ENCODE measurements at regions of chr5 and their contacts with region 1.

Region 1: DNA sequence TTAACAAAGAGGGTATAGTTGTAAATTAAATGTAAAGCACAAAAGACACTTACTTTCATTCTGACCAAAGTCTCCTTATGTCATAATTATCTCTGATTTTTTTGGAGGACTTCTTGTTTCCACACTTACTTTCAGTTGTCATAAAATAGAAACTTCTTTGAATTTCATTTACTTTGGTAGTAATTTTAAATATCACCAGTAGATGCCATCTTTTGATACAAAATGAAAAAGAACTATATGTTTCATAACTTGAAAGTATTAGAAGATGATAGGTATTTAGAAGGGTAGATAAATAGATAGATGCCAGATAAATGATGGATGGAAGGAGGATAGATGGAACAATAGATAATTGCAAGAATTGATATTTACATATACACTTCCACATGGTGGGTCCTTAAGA is 1865.3 kb upstream of the CDH9 start:
- DNase-seq: no peak
- H3K4me3 ChIP-seq: no peak overlapping the region
- H3K27ac ChIP-seq: no peak overlapping the region
- H3K4me1 ChIP-seq: no peaks in the 10 kb centered on the region
- H3K27me3 ChIP-seq: no peaks in the 10 kb centered on the region
- CTCF ChIP-seq: peak; percentile 22; the same call in 1 of the 2 replicates

Region 2: DNA sequence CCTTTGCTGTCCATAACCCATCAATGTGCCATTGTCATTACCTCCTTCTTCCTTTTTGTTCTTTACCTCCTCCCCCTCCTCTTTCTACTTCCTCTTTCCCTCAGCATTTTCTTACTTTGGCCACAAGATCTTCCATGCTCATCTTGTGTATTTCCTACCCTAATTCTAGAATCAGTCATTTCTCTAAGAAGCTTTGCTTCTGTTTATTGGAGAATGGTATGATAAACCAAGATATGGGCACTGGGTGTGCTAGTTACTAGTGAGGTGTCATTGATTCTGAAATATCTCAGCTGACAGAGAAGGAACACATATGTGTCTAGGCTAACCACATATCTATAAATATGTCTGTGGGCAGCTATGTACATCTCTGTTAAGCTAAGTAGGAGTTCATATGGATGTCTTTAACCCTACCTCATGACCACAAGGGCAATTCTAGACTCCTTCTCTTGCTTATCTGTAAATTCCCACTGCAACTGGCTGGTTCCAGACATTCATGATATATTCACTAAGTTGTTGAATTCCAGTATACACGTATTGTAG is 186.0 kb after region 1 on chr5:
- CTCF ChIA-PET with region 1: no interaction called
- POLR2A ChIA-PET with region 1: no interaction called
- intact Hi-C with region 1: no loop called
- DNase-seq: no peak
- H3K4me3 ChIP-seq: no peak overlapping the region
- H3K27ac ChIP-seq: no peak overlapping the region
- H3K4me1 ChIP-seq: no peaks in the 10 kb centered on the region
- H3K27me3 ChIP-seq: no peaks in the 10 kb centered on the region
- CTCF ChIP-seq: no peak

Region 3: DNA sequence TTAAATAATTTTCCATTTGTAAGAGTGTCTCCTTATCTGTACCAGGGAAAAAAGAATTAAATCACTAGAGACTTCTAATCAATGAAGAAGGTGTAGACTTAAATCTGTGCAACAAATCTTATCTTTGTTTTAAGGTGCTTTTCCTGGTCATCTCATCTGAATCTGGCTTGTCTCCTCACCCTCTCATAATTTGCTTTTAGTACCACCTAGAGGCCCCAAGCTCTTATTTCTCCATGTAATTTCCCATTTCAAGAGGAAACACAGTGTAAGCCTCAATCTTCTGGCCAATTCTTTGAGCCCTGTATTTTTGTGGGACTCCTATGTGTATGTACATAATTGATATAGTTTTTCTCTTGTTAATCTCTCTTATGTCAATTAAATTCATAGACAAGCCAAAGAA is 314.5 kb after region 1 on chr5:
- CTCF ChIA-PET with region 1: no interaction called
- POLR2A ChIA-PET with region 1: no interaction called
- intact Hi-C with region 1: loop called (anchors 5 kb)
- DNase-seq: peak; percentile 5
- H3K4me3 ChIP-seq: no peak overlapping the region
- H3K27ac ChIP-seq: no peak overlapping the region
- H3K4me1 ChIP-seq: no peaks in the 10 kb centered on the region
- H3K27me3 ChIP-seq: no peaks in the 10 kb centered on the region
- CTCF ChIP-seq: peak; percentile 24; the same call in 1 of the 2 replicates

Region 4: DNA sequence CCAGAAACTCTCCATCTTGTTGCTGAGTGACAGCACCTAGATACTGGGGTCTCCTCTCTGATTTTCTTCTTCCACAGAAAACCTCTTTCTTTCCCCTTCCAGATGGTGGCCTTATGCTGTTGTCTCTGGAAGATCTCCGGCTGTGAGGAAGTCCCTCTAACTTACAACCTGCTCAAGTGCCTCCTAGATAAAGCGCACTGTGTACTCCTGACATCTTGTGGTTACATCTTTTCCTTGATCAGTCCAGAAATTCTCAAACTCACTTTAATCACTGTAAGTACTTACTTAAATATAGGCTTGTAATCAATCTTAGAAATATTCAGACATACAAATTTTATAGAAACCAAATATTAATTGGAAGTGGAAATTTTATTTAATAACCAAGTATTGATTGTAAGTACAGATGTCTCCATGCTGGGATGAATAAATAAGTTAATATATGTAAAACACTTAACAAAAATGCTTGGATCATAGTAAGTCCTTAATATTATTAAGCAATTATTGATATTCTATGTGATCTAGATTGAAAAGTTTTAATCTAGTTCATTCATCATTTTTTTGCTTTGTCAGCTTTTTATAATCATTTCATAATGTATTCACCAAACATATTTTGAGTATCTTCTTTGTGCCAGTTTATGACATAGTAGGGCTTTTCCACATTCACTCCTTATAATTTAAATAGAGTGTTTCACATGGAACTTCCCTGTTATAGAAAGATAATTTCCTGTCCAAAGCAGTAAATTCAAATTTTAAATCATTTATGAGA is 908.5 kb after region 1 on chr5:
- CTCF ChIA-PET with region 1: no interaction called
- POLR2A ChIA-PET with region 1: no interaction called
- intact Hi-C with region 1: loop called (anchors 5 kb)
- DNase-seq: peak; percentile 51
- H3K4me3 ChIP-seq: no peak overlapping the region
- H3K27ac ChIP-seq: no peak overlapping the region
- H3K4me1 ChIP-seq: no peaks in the 10 kb centered on the region
- H3K27me3 ChIP-seq: no peaks in the 10 kb centered on the region
- CTCF ChIP-seq: peak; percentile 42

Region 5: DNA sequence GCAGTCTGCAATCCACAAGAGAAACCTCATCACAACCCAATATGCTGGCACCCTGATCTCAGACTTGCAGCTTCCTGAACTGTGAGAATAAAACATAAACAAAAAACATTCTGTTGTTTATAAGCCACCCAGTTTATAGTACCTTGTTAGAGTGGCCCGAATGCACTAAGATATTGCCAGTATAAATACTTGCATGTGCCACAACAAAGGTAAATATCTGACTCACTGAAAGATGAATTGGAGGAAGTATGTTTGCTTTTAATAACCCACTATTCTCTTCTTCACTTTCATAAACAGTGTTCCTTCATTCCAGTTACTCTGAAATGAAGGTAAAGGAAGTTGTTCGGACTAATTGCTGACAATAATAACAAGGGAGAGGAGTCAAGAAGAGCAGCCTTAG is 1126.5 kb after region 1 on chr5:
- CTCF ChIA-PET with region 1: no interaction called
- POLR2A ChIA-PET with region 1: no interaction called
- intact Hi-C with region 1: loop called (anchors 10 kb)
- DNase-seq: no peak
- H3K4me3 ChIP-seq: no peak overlapping the region
- H3K27ac ChIP-seq: no peak overlapping the region
- H3K4me1 ChIP-seq: no peaks in the 10 kb centered on the region
- H3K27me3 ChIP-seq: no peaks in the 10 kb centered on the region
- CTCF ChIP-seq: no peak

Measured in A673 (cell line).